H1 (cell line): ENCODE measurements at regions of chr13 and their contacts with region 1.

Region 1: GRCh38 chr13:83780227-83780626 is 102.0 kb downstream of the SLITRK1 start:
- DNase-seq: no peak
- H3K4me3 ChIP-seq: no peak overlapping the region
- H3K27ac ChIP-seq: no peak overlapping the region
- H3K4me1 ChIP-seq: no peaks in the 10 kb centered on the region
- H3K27me3 ChIP-seq: no peaks in the 10 kb centered on the region
- CTCF ChIP-seq: peak; percentile 11 to 71 (median 51)
- EP300 ChIP-seq: no peak
- POLR2A ChIP-seq: no peak
- RAD21 ChIP-seq: peak; percentile 80 to 84

Region 2: DNA sequence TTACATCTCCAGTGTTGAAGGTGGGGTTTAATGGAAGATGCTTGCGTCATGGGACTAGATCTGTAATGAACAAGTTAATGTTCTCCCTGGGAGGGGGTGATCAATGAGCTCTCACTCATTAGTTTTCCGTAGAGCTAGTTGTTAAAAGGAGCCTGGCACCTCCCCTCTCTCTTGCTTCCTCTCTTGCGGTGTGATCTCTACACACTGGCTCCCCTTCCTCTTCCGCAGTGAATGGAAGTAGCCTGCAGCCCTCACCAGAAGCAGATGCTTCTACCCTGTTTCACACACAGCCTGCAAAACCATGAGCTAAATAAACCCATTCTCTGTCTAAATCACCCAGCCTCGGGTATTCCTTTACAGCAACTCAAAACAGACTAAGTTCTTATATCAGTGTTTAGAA is 216.7 kb before region 1 on chr13:
- CTCF ChIA-PET with region 1: no interaction called
- POLR2A ChIA-PET with region 1: no interaction called
- DNase-seq: no peak
- H3K4me3 ChIP-seq: no peak overlapping the region
- H3K27ac ChIP-seq: no peak overlapping the region
- H3K4me1 ChIP-seq: no peaks in the 10 kb centered on the region
- H3K27me3 ChIP-seq: no peaks in the 10 kb centered on the region
- CTCF ChIP-seq: no peak
- EP300 ChIP-seq: no peak
- POLR2A ChIP-seq: no peak
- RAD21 ChIP-seq: no peak

Region 3: GRCh38 chr13:83716121-83716520 is 64.1 kb before region 1 on chr13:
- CTCF ChIA-PET with region 1: interaction called, 10 read pairs
- POLR2A ChIA-PET with region 1: no interaction called
- DNase-seq: no peak
- H3K4me3 ChIP-seq: no peak overlapping the region
- H3K27ac ChIP-seq: no peak overlapping the region
- H3K4me1 ChIP-seq: peaks cover 0 to 2% (median under 1%) of the 10 kb centered on the region in 4 experiments; a peak in 1 of 7 replicates
- H3K27me3 ChIP-seq: no peaks in the 10 kb centered on the region
- CTCF ChIP-seq: no peak
- EP300 ChIP-seq: no peak
- POLR2A ChIP-seq: no peak
- RAD21 ChIP-seq: no peak

Region 4: DNA sequence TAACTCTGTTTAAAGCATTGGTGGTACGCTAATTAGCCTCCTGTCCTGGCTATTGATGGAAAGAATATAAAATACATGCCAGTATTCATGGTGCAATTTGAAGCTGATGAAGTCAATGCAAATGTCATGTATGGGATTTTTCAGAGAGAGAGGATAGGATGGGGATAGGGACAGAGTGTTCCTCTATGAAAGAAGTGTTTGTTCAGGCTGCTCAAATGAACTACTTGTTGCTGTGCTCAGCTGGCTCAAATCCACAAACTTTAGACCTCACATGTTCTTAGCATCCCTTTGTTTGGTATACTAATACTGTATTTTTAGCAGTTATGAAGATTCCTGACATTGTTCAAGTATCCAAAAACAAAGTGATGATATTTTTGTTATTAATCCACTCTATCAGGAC is 14.4 kb before region 1 on chr13:
- CTCF ChIA-PET with region 1: interaction called, 15 read pairs
- POLR2A ChIA-PET with region 1: no interaction called
- DNase-seq: no peak
- H3K4me3 ChIP-seq: no peak overlapping the region
- H3K27ac ChIP-seq: no peak overlapping the region
- H3K4me1 ChIP-seq: no peaks in the 10 kb centered on the region
- H3K27me3 ChIP-seq: no peaks in the 10 kb centered on the region
- CTCF ChIP-seq: no peak
- EP300 ChIP-seq: no peak
- POLR2A ChIP-seq: no peak
- RAD21 ChIP-seq: no peak